ENCODE measurements at regions of chr1 and their contacts with region 1.

Region 1: DNA sequence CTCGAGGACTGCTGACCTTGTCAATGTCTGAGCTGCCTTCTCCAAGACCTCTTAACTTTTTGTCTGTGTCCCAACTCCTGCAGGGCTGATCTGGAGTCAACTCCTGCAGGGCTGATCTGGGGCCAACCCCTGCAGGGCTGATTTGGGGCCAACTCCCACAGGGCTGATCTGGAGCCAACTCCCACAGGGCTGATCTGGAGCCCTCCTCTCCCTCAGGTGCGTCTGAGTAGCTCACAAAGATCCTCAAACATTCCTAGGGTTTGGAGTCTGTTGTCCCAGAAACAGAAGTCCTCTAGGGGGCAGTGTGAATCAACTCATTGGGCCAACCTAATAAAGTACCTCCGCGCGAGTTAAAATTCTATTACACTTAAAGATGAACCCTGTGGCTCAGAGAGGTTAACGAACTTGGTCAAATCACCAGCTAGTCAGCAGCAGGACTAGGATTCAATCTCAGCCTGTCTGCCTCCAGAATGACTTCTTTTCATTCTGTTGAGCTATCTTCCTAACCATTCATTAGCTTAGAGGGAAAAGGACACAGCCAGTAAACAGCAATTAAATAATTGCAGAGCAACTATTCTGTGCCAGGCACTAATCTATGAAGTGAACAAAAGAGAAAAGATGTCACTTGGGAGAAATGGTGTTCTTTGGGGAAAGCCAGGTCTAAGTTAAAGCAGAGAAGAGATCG is 17.2 kb upstream of the RLF start:
- DNase-seq: peak; percentile 73
- H3K4me3 Mint-ChIP-seq: no peak overlapping the region
- H3K27ac Mint-ChIP-seq: no peak overlapping the region
- H3K4me1 Mint-ChIP-seq: peaks cover 39% of the 10 kb centered on the region
- H3K27me3 Mint-ChIP-seq: peaks cover 46% of the 10 kb centered on the region
- CTCF ChIP-seq: peak; percentile 73

Region 2: DNA sequence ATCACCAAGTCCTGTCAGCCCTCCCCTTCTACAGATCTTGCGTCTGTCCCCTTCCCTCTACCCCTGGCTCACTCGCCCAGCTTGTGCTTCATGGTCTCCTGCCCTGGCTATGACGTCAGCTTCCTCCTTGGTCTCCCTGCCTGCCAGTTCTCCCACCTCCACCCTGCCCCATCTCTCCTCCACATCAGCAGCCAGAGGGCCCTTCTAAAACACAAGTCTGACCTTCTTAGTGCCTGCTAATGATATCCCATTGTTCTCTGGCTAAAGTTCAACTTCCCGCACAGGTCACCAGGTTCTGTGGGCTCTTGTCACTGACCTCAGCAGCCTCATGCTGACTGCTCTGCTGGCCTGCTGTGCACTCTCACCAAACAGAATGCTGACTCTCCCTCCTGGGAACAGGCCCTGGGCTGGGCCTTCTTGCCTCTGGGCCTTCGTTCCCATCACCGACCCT is 217.7 kb before region 1 on chr1:
- CTCF ChIA-PET with region 1: no interaction called
- intact Hi-C with region 1: no loop called
- DNase-seq: no peak
- H3K4me3 Mint-ChIP-seq: no peak overlapping the region
- H3K27ac Mint-ChIP-seq: no peak overlapping the region
- H3K4me1 Mint-ChIP-seq: peaks cover 6% of the 10 kb centered on the region
- H3K27me3 Mint-ChIP-seq: peaks cover 48% of the 10 kb centered on the region
- CTCF ChIP-seq: no peak

Region 3: GRCh38 chr1:40094466-40095110 is 49.4 kb before region 1 on chr1:
- CTCF ChIA-PET with region 1: interaction called, 11 read pairs
- intact Hi-C with region 1: no loop called
- DNase-seq: no peak
- H3K4me3 Mint-ChIP-seq: no peak overlapping the region
- H3K27ac Mint-ChIP-seq: no peak overlapping the region
- H3K4me1 Mint-ChIP-seq: peaks cover 33% of the 10 kb centered on the region
- H3K27me3 Mint-ChIP-seq: no peaks in the 10 kb centered on the region
- CTCF ChIP-seq: no peak

Region 4: DNA sequence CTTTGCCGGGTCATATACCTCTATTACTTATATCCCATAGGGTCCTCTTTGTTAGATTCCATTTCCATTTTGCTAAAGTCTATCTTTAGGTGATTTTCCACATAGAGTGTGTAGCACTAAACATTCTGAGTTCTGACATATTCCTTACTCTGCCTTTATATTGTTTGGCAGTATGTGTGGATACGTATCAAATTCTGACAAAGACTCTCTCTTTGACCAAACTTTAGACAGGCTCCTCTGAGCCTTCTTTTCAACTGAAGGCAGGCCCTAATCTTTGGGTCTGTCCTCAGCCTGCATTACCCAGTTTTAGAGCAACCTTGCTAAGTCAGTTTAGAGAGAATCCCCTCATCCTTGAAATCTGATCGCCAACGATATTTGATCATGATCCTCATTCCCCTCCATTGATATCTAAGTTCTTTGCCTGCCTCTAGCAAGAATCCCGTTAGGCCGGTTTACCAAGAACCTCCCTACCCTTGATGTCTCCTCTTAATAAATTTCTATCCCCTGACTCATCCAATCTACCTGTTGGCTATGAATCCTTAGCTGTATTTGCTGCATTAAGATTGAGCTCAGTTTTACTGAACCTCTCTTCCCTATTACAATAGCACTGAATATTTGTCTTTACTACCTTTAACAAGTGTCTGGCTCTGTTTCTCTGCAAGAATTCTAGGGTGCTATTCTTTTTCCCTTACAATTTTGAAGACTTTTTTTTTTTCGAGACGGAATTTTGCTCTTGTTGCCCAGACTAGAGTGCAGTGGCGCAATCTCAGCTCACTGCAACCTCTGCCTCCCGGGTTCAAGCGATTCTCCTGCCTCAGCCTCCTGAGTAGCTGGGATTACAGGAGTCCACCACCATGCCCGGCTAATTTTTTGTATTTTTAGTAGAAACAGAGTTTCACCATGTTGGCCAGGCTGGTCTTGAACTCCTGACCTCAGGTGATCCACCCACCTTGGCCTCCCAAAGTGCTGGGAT is 36.5 kb before region 1 on chr1:
- CTCF ChIA-PET with region 1: interaction called, 3 read pairs
- intact Hi-C with region 1: loop called (anchors 5 kb)
- DNase-seq: peak; percentile 84
- H3K4me3 Mint-ChIP-seq: peak overlapping the region; percentile 46
- H3K27ac Mint-ChIP-seq: peak overlapping the region; percentile 94
- H3K4me1 Mint-ChIP-seq: peaks cover 13% of the 10 kb centered on the region
- H3K27me3 Mint-ChIP-seq: no peaks in the 10 kb centered on the region
- CTCF ChIP-seq: no peak

Region 5: DNA sequence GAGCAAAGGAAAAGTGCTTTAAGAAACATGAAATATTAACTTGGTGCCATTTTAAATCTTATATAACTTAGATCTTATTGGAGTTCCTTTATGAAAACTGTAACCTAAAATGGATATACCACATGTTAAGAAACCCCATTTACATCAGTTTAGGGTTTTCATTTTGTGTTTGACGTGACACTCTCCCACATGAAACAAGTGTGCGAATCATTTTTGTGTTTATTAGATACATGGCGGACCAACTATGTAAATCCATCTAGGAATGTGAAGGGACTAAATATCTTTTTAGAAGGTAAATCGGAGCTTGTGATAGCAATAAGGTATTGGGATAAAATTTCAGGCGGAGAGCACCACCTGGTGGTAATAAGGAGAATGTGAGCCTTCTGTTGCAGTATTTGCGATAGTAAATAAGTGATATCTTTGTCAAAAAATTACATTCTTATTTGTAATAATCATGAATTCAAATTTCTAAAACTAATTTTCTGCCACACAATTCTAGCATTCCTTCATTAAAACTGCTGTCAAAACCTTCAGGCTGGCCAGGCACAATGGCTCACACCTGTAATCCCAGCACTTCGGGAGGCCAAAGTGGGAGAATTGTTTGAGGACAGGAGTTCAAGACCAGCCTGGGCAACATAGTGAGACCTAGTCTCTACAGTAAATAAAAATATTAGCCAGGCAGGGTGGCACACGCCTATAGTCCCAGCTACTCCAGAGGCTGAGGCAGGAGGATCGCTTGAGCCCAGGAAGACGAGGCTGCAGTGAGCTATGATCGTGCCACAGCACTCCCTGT is 260.8 kb after region 1 on chr1:
- CTCF ChIA-PET with region 1: interaction called, 17 read pairs
- intact Hi-C with region 1: loop called (anchors 1 kb)
- DNase-seq: peak; percentile 43
- H3K4me3 Mint-ChIP-seq: no peak overlapping the region
- H3K27ac Mint-ChIP-seq: no peak overlapping the region
- H3K4me1 Mint-ChIP-seq: peaks cover 6% of the 10 kb centered on the region
- H3K27me3 Mint-ChIP-seq: no peaks in the 10 kb centered on the region
- CTCF ChIP-seq: peak; percentile 64

Measured in Calu3 (cell line).